ENCODE measurements at regions of chr1 and their contacts with region 1.

Region 1: DNA sequence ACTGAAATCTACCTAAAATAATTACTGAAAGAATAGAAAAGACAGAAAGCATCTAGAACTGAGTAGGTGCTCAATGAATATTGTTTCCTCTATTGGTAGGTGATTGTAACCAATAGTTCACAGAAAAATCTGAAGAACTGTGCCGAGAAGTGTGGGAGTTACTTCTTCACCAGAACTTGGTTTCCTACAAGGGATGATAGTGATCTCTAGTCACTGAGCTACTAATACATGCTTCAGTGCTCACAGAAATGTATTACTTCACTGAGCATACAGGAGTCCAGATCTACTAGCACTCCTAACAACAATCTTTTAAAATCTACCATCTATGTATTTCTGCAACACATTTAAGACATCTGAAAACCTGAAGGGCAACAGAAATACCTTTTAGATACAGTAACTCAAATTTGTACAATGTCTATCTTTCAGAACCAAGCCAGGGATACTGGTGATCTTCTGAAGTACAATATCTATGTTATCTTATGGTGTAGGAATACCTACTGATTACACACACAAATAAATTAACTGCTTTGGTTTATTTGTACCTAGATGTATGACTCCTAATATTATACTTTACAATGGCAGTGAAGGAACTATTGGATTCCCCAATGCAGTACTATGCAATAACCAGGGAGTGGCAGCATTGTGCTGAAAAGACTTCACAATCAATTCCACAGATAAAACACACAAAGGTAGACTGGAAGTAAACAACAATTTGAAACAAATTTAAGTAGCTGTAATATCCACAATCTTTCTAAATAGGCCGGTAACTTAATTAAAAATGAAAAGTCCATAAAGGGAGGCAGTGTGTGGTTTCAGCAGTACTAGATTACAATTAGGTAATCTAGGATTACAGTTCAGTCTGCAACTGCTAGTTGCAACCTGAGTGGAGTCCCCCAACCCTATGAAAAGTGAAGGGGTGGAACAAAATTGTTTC is 243.0 kb downstream of the SLC45A1 start:
- DNase-seq: peak; percentile 32
- H3K4me3 Mint-ChIP-seq: no peak overlapping the region
- H3K27ac Mint-ChIP-seq: peak overlapping the region; percentile 22
- H3K4me1 Mint-ChIP-seq: peaks cover 39% of the 10 kb centered on the region
- H3K27me3 Mint-ChIP-seq: no peaks in the 10 kb centered on the region

Region 2: GRCh38 chr1:8571200-8571984 is 10.5 kb after region 1 on chr1:
- CTCF ChIA-PET with region 1: interaction called, 13 read pairs
- POLR2A ChIA-PET with region 1: no interaction called
- DNase-seq: no peak
- H3K4me3 Mint-ChIP-seq: no peak overlapping the region
- H3K27ac Mint-ChIP-seq: no peak overlapping the region
- H3K4me1 Mint-ChIP-seq: peaks cover 10% of the 10 kb centered on the region
- H3K27me3 Mint-ChIP-seq: no peaks in the 10 kb centered on the region

Region 3: GRCh38 chr1:8671306-8671917 is 110.5 kb after region 1 on chr1:
- CTCF ChIA-PET with region 1: interaction called, 73 read pairs
- POLR2A ChIA-PET with region 1: interaction called, 4 read pairs
- DNase-seq: no peak
- H3K4me3 Mint-ChIP-seq: no peak overlapping the region
- H3K27ac Mint-ChIP-seq: no peak overlapping the region
- H3K4me1 Mint-ChIP-seq: peaks cover 39% of the 10 kb centered on the region
- H3K27me3 Mint-ChIP-seq: no peaks in the 10 kb centered on the region

Region 4: DNA sequence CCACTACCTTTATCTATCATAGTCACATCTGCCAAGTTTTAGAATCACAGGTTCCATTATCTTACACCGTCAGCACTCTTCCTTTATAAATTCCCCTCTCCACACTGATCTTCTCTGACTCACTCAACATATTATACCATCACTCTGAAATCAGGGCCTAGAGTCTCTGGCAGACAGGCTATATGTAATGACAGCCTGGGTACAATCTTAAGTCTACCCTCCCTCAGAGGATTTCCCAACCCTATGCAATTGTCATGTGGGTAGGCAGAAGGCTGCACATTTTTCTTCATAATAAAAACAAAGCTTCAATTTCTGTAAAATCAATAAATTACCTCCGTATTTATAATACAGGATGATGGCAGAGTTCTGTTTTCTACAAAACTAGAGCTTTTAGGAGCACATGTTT is 118.5 kb after region 1 on chr1:
- CTCF ChIA-PET with region 1: interaction called, 73 read pairs
- POLR2A ChIA-PET with region 1: no interaction called
- DNase-seq: no peak
- H3K4me3 Mint-ChIP-seq: no peak overlapping the region
- H3K27ac Mint-ChIP-seq: no peak overlapping the region
- H3K4me1 Mint-ChIP-seq: peaks cover 24% of the 10 kb centered on the region
- H3K27me3 Mint-ChIP-seq: no peaks in the 10 kb centered on the region

Region 5: GRCh38 chr1:8718850-8719361 is 158.0 kb after region 1 on chr1:
- CTCF ChIA-PET with region 1: interaction called, 15 read pairs
- POLR2A ChIA-PET with region 1: no interaction called
- DNase-seq: no peak
- H3K4me3 Mint-ChIP-seq: no peak overlapping the region
- H3K27ac Mint-ChIP-seq: no peak overlapping the region
- H3K4me1 Mint-ChIP-seq: peaks cover 34% of the 10 kb centered on the region
- H3K27me3 Mint-ChIP-seq: no peaks in the 10 kb centered on the region

Region 6: DNA sequence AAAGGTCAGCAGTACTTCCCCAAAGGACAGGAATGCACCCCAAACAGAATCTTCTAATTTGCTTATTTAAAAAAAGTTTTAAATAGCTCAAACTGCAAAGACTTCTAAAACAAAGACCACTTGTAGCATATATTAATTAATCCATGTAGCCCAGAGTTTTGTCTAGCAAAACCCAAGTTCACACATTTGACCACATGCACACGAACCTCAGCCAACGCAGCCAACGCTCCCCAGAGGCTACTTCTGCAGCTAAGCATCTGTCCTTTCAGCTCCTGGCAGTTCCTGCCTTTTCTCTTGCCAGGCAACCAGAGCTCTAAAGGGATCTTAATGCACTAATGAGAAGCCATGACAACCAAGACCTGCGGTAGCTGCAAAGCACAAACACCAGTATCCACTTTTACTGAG is 166.9 kb after region 1 on chr1:
- CTCF ChIA-PET with region 1: interaction called, 70 read pairs
- POLR2A ChIA-PET with region 1: interaction called, 5 read pairs
- DNase-seq: no peak
- H3K4me3 Mint-ChIP-seq: no peak overlapping the region
- H3K27ac Mint-ChIP-seq: no peak overlapping the region
- H3K4me1 Mint-ChIP-seq: peaks cover 21% of the 10 kb centered on the region
- H3K27me3 Mint-ChIP-seq: no peaks in the 10 kb centered on the region

Measured in activated CD4-positive, alpha-beta memory T cell treated with anti-CD3 and anti-CD28 coated beads, Interleukin-2, amount 10 ng/mL, durations not matched to agents 7 days and 5 days (primary cell).